ENCODE measurements at regions of chr9 and their contacts with region 1.

Region 1: DNA sequence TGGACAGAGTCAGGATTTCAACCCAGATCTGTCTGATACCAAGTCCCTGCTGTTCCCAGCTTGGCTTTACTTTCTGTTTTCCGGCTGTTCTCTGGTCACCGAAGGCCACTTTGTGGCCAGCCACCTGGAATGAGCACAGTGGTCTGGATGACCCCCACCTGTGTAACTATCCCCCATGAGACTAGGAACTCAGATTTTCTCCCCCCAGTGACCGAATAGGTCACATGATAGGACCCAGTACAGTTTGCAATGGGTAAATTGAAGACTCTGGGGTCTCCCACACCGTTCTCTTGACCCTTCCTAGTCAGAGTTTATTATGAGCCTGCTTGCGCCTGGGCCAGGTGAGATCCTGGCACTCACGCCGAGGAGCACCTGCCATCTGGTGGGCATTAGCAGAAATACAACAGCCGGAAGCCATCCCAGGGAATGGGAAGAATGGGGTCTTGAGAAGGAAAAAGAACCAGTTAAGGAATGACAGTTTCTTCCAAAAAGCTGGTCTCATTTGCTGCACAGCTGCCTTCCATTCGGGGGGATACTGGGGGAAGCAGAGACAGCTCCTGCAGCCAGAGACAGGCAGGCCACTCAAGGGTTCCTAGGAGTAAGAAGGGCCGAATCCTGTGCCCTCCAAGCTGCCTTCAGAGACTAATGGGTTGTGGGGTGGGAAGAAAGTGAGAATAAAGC is 7.1 kb downstream of the PHYHD1 start:
- DNase-seq: peak; percentile 66
- H3K4me3 ChIP-seq: no peak overlapping the region
- H3K27ac ChIP-seq: no peak overlapping the region
- H3K4me1 ChIP-seq: peaks cover 2% of the 10 kb centered on the region
- H3K27me3 ChIP-seq: no peaks in the 10 kb centered on the region
- CTCF ChIP-seq: peak; percentile 92

Region 2: GRCh38 chr9:128733256-128733655 is 194.6 kb before region 1 on chr9:
- CTCF ChIA-PET with region 1: no interaction called
- POLR2A ChIA-PET with region 1: no interaction called
- intact Hi-C with region 1: loop called (anchors 5 kb)
- DNase-seq: peak; percentile 95
- H3K4me3 ChIP-seq: no peak overlapping the region
- H3K27ac ChIP-seq: peak overlapping the region; percentile 35
- H3K4me1 ChIP-seq: peaks cover 10% of the 10 kb centered on the region
- H3K27me3 ChIP-seq: no peaks in the 10 kb centered on the region
- CTCF ChIP-seq: peak; percentile 93

Measured in A673 (cell line).